ENCODE measurements at regions of chr17 and their contacts with region 1.

Region 1: GRCh38 chr17:9959377-9959981 is 54.4 kb upstream of the RCVRN start:
- DNase-seq: peak; percentile 74 to 91
- ATAC-seq: peak; percentile 77 to 91
- H3K4me3 ChIP-seq: no peak overlapping the region
- H3K27ac ChIP-seq: peak overlapping the region in 1 of 2 experiments; percentile 26; a peak in 2 of 6 replicates
- H3K4me1 ChIP-seq: peaks cover 4% of the 10 kb centered on the region; the same call in 1 of the 3 replicates
- CTCF ChIP-seq: peak; percentile 85
- EP300 ChIP-seq: no peak
- POLR2A ChIP-seq: no peak
- RAD21 ChIP-seq: peak; percentile 76 to 77

Region 2: DNA sequence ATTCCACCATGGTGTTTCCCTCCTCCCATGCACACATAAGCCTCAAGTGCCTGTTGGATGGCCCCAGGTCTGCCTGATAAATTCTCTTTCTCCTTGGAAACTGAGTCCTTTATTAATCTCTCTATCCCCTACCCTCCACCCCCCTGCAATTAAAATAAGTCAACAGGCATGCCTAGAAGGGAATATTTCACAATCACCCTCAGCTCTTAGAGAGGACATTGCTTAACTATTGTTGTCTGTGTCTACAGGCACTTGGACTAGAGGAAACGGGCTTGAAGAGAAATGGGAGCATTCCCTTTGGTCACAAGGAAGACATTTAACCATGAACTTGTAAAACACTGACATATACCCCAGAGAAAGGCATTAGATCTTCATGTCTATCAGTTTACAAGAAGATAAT is 93.9 kb before region 1 on chr17:
- CTCF ChIA-PET with region 1: no interaction called
- POLR2A ChIA-PET with region 1: no interaction called
- DNase-seq: no peak
- ATAC-seq: no peak
- H3K4me3 ChIP-seq: no peak overlapping the region
- H3K27ac ChIP-seq: peak overlapping the region in 1 of 2 experiments; percentile 24; a peak in 2 of 6 replicates
- H3K4me1 ChIP-seq: peaks cover 12% of the 10 kb centered on the region; the same call in 1 of the 3 replicates
- CTCF ChIP-seq: no peak
- EP300 ChIP-seq: no peak
- POLR2A ChIP-seq: no peak
- RAD21 ChIP-seq: no peak

Region 3: GRCh38 chr17:9918804-9919352 is 40.6 kb before region 1 on chr17:
- CTCF ChIA-PET with region 1: interaction called, 133 read pairs
- POLR2A ChIA-PET with region 1: no interaction called
- DNase-seq: no peak
- ATAC-seq: peak in 1 of 2 experiments; percentile 18; a peak in 2 of 6 replicates
- H3K4me3 ChIP-seq: no peak overlapping the region
- H3K27ac ChIP-seq: peak overlapping the region in 1 of 2 experiments; percentile 42; a peak in 2 of 6 replicates
- H3K4me1 ChIP-seq: peaks cover 4% of the 10 kb centered on the region; the same call in 1 of the 3 replicates
- CTCF ChIP-seq: no peak
- EP300 ChIP-seq: no peak
- POLR2A ChIP-seq: no peak
- RAD21 ChIP-seq: no peak

Region 4: DNA sequence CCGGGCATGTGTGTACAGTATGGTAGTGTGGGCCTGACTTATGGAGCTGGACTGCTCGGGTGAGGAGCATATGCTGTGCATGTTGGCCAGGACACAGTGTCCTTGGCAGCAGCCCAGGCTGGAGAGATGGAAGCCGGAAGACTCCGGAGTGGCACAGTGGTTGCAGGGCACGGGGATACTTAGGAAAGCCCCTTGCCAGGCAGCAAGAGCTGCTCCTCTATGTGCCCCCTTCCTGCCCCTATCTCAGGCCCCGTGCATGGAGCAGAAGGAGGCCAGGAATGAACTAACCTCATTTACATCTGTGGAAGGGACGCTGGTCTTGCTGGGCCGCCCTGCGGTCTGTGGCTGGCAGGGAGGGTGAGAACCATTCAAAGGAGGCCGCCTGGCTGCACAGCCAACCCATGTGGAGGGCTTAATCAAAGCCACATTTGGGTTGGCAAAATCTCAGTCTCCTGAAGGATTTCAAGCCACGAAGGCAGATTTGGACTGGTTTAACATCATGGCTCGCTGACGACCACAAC is 22.2 kb before region 1 on chr17:
- CTCF ChIA-PET with region 1: interaction called, 40 read pairs
- POLR2A ChIA-PET with region 1: no interaction called
- DNase-seq: no peak
- ATAC-seq: peak; percentile 30 to 31; a peak in 4 of 6 replicates
- H3K4me3 ChIP-seq: no peak overlapping the region
- H3K27ac ChIP-seq: no peak overlapping the region
- H3K4me1 ChIP-seq: peaks cover 5% of the 10 kb centered on the region; the same call in 2 of the 3 replicates
- CTCF ChIP-seq: no peak
- EP300 ChIP-seq: no peak
- POLR2A ChIP-seq: no peak
- RAD21 ChIP-seq: no peak

Region 5: DNA sequence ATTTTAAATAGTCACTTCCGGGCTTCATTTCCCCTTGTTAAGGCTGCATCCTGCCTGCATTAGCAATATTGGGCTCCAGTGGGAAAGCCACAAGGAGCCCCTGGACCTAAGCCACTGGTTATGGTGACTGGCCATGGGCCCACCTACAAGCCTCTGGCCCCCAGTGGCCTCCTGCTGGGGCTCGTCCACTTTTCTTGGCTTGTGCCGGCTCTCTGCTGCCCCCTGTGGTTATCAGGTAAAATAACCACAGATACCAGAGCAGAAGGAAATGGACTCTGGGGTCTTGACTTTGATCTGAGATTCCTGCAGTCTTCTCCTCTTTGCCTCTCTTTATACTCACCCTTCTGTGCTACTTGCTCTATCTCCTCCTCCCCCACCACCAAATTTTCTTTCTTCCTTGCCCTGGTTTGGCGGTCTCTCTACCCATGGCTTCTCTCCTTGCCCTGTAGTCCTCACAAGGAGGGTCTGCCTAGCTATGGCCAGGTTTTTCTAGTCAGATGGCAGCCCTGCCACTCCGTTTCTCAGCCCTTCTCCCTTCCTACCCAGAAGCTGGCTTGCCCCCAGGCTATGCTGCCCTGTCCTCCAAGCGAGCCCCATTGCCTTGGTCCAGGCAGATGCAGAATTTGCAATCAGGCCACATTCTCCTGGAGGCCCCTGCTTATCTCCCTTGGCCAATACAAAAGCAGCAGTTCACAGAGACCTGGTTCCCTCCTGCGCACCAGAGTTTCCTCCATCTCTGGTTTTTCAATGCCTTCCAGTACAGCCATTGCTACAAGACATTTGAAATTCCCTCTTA is 28.5 kb after region 1 on chr17:
- CTCF ChIA-PET with region 1: interaction called, 232 read pairs
- POLR2A ChIA-PET with region 1: no interaction called
- DNase-seq: peak; percentile 57 to 66
- ATAC-seq: peak in 1 of 2 experiments; percentile 88; a peak in 3 of 6 replicates
- H3K4me3 ChIP-seq: no peak overlapping the region
- H3K27ac ChIP-seq: no peak overlapping the region
- H3K4me1 ChIP-seq: no peaks in the 10 kb centered on the region
- CTCF ChIP-seq: peak; percentile 82
- EP300 ChIP-seq: no peak
- POLR2A ChIP-seq: no peak
- RAD21 ChIP-seq: peak; percentile 45